PC-9 (cell line): ENCODE measurements at regions of chr4 and their contacts with region 1.

Region 1: DNA sequence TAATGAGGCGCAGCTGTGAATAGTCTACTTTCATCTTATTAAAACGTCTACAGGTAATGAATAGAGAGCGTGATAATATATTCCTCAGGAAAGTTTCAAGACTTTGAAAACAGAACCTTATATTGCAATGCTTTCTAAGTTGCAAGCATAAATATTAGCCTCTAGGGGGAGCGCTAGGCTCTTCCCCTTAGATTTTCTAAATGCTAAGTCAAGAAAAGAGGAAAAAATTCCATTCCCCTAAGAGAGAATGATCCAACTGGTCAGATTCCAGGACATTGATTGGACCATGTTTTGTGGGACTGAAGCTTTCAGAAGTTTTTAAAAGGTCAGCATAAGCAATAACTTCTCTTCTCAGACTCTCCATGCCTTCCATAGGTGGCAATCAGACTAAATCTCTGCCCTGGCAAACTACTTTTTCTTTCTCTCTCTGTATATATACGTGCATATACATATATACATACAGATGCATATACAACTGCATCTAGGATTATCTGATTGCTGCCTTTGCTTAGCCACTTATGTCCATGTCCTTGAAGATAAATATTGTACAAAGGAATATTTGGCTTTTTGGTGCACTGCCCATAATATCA is 492.9 kb downstream of the INPP4B start:
- DNase-seq: peak; percentile 6 to 62
- H3K4me3 ChIP-seq: no peak overlapping the region
- H3K27ac ChIP-seq: peak overlapping the region; percentile 38; the same call in 1 of the 2 replicates
- H3K4me1 ChIP-seq: peaks cover 33% of the 10 kb centered on the region
- H3K27me3 ChIP-seq: no peaks in the 10 kb centered on the region
- CTCF ChIP-seq: peak; percentile 83

Region 2: DNA sequence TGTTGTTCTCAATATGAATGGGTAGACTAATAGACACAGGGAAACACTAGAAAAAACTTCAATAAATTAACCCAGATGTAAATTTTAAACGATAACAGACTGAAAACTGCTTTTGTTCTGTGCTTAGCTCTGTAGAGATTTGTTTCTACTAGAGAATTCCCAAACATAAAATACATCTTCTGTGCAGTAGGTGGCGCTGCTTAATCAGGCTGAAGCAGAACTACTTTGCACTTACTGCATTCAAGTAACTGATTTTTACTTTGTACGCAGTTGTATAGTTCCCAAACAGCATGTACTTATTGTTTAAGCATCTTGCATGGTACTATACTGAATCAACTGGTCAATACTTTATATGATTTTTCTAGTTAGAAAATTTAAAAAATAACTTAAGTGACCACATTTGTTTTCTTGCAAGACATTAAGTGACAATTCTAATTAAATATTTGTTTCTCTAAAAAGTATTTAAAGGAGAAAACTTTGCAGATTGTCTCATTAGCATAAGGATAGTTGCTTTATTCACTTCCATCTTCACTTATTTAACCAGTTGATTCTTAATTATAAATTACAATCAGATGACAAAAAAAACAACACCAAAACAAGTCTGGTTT is 226.2 kb before region 1 on chr4:
- CTCF ChIA-PET with region 1: no interaction called
- POLR2A ChIA-PET with region 1: no interaction called
- intact Hi-C with region 1: loop called (anchors 10 kb)
- DNase-seq: peak; percentile 38 to 46
- H3K4me3 ChIP-seq: no peak overlapping the region
- H3K27ac ChIP-seq: no peak overlapping the region
- H3K4me1 ChIP-seq: no peaks in the 10 kb centered on the region
- H3K27me3 ChIP-seq: no peaks in the 10 kb centered on the region
- CTCF ChIP-seq: peak; percentile 89

Region 3: DNA sequence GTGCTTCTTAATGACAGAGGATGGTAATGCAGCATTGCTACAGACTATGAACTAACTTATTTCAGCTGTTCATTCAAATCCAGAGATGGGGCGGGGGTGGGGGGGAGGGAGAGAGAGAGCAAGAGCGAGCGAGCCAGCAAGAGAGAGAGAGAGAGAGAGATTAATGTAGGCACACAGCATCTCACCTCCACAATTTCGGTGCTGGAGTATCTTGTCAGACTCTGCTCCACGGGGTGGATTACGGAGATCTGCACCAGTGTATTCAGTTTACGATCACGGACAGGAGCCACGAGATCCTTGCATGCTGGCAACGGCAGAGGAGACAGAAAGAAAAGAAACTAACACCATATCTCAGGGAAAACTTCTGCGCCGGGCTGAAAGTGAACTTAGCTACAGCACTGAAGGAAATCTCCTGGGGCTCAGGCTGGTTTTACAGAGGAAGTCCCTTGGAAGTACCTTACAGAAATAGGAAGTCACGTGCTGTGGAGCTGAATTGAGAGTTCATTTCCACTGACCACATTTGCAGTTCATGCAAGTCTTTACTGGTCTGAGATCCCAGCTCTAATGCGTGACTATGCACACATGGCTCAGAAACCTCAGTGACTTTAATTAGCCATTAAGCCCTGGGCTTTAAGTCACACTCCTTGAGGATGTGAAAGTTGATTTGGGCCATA is 51.9 kb after region 1 on chr4:
- CTCF ChIA-PET with region 1: no interaction called
- POLR2A ChIA-PET with region 1: interaction called, 7 read pairs
- intact Hi-C with region 1: loop called (anchors 10 kb)
- DNase-seq: no peak
- H3K4me3 ChIP-seq: no peak overlapping the region
- H3K27ac ChIP-seq: peak overlapping the region; percentile 100
- H3K4me1 ChIP-seq: peaks cover 68% of the 10 kb centered on the region
- H3K27me3 ChIP-seq: no peaks in the 10 kb centered on the region
- CTCF ChIP-seq: no peak

Region 4: DNA sequence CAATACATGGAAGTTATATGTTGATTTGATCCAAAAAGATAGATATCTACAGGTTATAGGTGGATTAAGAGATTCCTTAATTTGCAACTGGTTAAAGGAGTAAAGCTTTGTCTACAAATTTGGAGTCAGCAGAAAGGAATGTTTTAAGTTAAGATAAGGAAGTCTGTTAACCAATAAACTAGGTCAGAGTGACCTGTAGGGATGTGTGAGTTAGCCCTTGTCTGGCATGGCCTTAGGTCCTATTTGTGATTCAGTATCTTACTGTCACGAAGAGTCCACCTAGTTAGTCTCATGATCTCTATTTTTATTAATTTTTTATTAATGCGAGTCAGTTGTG is 262.0 kb after region 1 on chr4:
- CTCF ChIA-PET with region 1: no interaction called
- POLR2A ChIA-PET with region 1: no interaction called
- intact Hi-C with region 1: loop called (anchors 1 kb)
- DNase-seq: peak; percentile 15 to 92
- H3K4me3 ChIP-seq: peak overlapping the region; percentile 32; the same call in 1 of the 2 replicates
- H3K27ac ChIP-seq: peak overlapping the region; percentile 92
- H3K4me1 ChIP-seq: peaks cover 35% of the 10 kb centered on the region
- H3K27me3 ChIP-seq: no peaks in the 10 kb centered on the region
- CTCF ChIP-seq: no peak

Region 5: DNA sequence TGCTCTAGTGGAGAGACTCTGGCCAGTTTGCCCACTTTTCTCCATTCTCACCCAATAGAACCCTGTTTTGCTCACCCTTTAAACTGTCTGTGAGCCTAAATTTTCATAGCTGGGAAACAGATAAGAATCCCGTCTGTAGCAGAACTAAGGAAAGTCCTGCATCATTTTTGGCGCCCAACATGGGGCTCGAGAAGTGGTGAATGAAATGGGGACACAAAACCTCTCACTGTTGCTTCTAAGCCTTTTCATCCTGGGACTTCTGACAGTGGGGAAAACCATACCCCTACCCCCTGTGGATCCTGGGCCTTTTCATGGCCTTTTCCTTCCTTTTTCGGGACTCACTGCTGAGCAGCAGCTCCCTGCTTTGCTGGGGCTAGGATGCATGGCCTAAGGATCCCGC is 302.9 kb after region 1 on chr4:
- CTCF ChIA-PET with region 1: no interaction called
- POLR2A ChIA-PET with region 1: no interaction called
- intact Hi-C with region 1: no loop called
- DNase-seq: peak in 1 of 2 experiments; percentile 10
- H3K4me3 ChIP-seq: no peak overlapping the region
- H3K27ac ChIP-seq: no peak overlapping the region
- H3K4me1 ChIP-seq: no peaks in the 10 kb centered on the region
- H3K27me3 ChIP-seq: no peaks in the 10 kb centered on the region
- CTCF ChIP-seq: no peak

Region 6: GRCh38 chr4:142703694-142704309 is 350.6 kb after region 1 on chr4:
- CTCF ChIA-PET with region 1: no interaction called
- POLR2A ChIA-PET with region 1: no interaction called
- intact Hi-C with region 1: no loop called
- DNase-seq: no peak
- H3K4me3 ChIP-seq: no peak overlapping the region
- H3K27ac ChIP-seq: no peak overlapping the region
- H3K4me1 ChIP-seq: no peaks in the 10 kb centered on the region
- H3K27me3 ChIP-seq: no peaks in the 10 kb centered on the region
- CTCF ChIP-seq: no peak

Region 7: DNA sequence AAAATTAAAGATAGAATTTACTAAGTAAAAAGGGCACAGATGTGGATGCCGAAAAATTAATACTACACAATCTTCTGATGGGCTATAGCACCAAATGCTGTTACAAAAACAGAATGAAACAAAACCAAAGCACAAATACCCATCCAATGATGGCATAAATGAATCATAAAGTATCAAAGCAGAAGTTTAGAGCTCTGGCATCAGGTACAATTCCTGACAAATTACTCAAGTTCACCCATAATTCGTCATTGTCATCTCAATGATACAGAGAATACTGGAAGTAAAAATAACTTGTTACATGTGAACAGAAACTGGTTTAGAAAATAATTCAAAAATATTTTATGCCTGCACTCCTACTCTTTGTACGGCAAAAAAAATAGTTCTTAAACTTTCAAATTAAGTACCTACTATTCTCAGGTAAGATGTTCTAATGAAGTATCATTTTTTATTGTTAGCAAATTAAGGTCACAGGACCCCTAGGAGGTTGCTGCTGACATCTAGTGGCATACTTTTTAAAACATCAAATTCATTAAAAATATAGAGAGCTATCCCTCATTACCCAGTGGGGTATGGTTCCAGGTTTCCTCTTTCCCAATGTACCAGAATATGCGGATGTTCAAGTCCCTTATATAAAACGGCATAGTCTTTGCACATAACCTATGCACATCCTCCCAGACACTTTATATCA is 366.8 kb after region 1 on chr4:
- CTCF ChIA-PET with region 1: interaction called, 5 read pairs
- POLR2A ChIA-PET with region 1: interaction called, 18 read pairs
- intact Hi-C with region 1: loop called (anchors 1 kb)
- DNase-seq: peak in 1 of 2 experiments; percentile 65
- H3K4me3 ChIP-seq: no peak overlapping the region
- H3K27ac ChIP-seq: peak overlapping the region; percentile 64
- H3K4me1 ChIP-seq: peaks cover 16% of the 10 kb centered on the region
- H3K27me3 ChIP-seq: no peaks in the 10 kb centered on the region
- CTCF ChIP-seq: peak; percentile 63

Region 8: GRCh38 chr4:142778430-142778829 is 425.2 kb after region 1 on chr4:
- CTCF ChIA-PET with region 1: no interaction called
- POLR2A ChIA-PET with region 1: no interaction called
- intact Hi-C with region 1: no loop called
- DNase-seq: no peak
- H3K4me3 ChIP-seq: no peak overlapping the region
- H3K27ac ChIP-seq: no peak overlapping the region
- H3K4me1 ChIP-seq: peaks cover 6% of the 10 kb centered on the region; the same call in 1 of the 2 replicates
- H3K27me3 ChIP-seq: no peaks in the 10 kb centered on the region
- CTCF ChIP-seq: no peak

Region 9: GRCh38 chr4:142840516-142841123 is 487.4 kb after region 1 on chr4:
- CTCF ChIA-PET with region 1: no interaction called
- POLR2A ChIA-PET with region 1: no interaction called
- intact Hi-C with region 1: loop called (anchors 1 kb)
- DNase-seq: no peak
- H3K4me3 ChIP-seq: no peak overlapping the region
- H3K27ac ChIP-seq: no peak overlapping the region
- H3K4me1 ChIP-seq: peaks cover 22% of the 10 kb centered on the region
- H3K27me3 ChIP-seq: no peaks in the 10 kb centered on the region
- CTCF ChIP-seq: peak; percentile 77

Region 10: GRCh38 chr4:143417679-143418403 is 1064.6 kb after region 1 on chr4:
- CTCF ChIA-PET with region 1: no interaction called
- POLR2A ChIA-PET with region 1: no interaction called
- intact Hi-C with region 1: no loop called
- DNase-seq: no peak
- H3K4me3 ChIP-seq: no peak overlapping the region
- H3K27ac ChIP-seq: no peak overlapping the region
- H3K4me1 ChIP-seq: peaks cover 21% of the 10 kb centered on the region
- H3K27me3 ChIP-seq: no peaks in the 10 kb centered on the region
- CTCF ChIP-seq: no peak